Lower leg skin (tissue), 4 donors: ENCODE measurements at regions of chr9 and their contacts with region 1.

Region 1: DNA sequence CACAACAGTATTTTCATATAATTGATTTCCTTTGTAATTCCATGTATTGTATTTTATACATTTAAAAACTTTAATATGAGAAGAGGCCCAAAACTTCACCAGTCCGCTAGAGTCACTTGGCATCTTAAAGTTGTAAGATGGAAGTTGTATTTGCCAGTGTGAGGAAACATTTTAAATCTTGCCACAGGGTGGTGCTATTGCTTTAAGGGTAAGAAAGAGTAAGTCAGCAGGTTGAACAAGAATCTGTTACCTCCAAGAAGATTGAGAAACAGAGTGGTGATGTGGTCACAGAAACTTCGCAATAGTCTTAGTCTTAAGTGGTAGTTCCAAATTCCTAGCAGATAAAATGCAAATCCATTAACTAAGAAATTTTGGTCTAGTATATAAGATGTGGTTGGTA is 39.8 kb upstream of the RANBP6 start:
- DNase-seq: peak in 1 of 2 donors; percentile 76
- H3K4me3 ChIP-seq: no peak overlapping the region
- CTCF ChIP-seq: no peak
- POLR2A ChIP-seq: no peak

Region 2: DNA sequence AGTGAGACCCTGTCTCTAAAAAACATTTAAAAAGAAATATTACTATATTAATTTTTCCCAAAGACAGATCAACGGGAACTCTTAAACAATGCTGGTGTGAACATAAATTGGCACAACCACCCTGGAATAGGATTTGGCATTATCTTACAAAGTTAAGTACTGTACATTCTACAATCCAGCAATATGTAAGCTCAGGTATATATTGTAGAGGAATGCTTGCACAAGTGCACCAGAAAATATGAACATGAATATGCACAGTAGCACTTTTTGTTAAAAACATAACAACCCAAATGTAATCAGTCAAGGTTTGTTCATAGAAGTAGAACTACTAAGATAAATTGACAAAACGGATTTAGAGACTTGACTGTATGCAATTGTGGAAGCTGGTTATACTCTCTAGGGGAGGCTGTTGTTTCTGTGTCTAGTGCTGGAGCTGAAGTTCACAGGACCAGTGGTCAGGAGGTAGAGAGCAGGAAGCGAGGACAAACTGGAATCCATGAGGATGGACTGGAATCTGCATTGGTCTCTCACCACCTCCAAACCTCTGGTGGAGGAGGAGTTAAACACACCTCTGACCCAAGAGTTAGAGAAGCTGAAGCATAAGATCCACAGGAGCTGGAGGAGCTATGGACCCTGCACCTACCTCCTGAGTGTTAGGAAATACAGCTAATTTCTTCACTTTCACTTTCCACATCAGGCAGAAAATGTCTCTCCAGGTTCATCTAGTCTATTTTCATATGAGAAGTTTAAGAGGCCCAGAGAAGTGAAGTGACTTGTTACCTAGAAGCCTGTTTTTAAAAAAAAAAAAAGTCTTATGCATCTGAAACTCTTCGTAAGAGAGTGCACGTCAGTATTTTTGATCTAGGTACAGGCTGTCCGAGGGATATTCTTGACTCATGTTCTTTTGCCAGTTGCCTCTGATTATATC is 446.7 kb before region 1 on chr9:
- intact Hi-C with region 1: no loop called
- DNase-seq: no peak
- H3K4me3 ChIP-seq: no peak overlapping the region
- CTCF ChIP-seq: no peak
- POLR2A ChIP-seq: no peak

Region 3: GRCh38 chr9:5884191-5884590 is 171.0 kb before region 1 on chr9:
- intact Hi-C with region 1: loop called (anchors 2 kb)
- DNase-seq: peak in 1 of 2 donors; percentile 67
- H3K4me3 ChIP-seq: no peak overlapping the region
- CTCF ChIP-seq: no peak
- POLR2A ChIP-seq: no peak

Region 4: DNA sequence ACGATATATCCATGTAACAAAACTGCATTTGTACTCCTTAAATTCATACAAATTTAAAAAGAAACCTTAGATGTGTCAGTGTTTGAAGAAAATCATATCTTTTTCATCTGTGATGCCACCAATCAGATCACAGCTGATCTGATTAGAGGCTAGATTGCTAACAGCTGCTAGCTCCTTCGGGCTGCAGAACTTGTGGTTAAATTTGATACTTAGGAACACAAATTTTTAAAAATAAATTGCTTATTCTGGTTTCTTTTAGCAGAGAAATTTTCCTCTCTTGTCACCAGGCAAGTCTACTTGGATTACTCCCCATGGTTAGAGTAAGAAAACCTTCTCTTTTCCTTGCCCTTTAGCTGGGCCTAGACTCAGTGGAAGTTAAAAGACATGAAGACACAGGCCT is 54.8 kb after region 1 on chr9:
- intact Hi-C with region 1: loop called (anchors 10 kb)
- DNase-seq: no peak
- H3K4me3 ChIP-seq: no peak overlapping the region
- CTCF ChIP-seq: no peak
- POLR2A ChIP-seq: no peak